Activated naive CD8-positive, alpha-beta T cell treated with anti-CD3 and anti-CD28 coated beads, Interleukin-2, amount 10 ng/mL, durations not matched to agents 7 days and 5 days (primary cell): ENCODE measurements at regions of chr21 and their contacts with region 1.

Region 1: GRCh38 chr21:29018540-29018939 is 609 bp downstream of the RWDD2B start:
- DNase-seq: no peak
- ATAC-seq: no peak
- H3K4me3 Mint-ChIP-seq: peak overlapping the region; percentile 85
- H3K27ac Mint-ChIP-seq: peak overlapping the region; percentile 93
- H3K4me1 Mint-ChIP-seq: peaks cover 29% of the 10 kb centered on the region
- H3K27me3 Mint-ChIP-seq: no peaks in the 10 kb centered on the region

Region 2: GRCh38 chr21:28884976-28885852 is 133.3 kb before region 1 on chr21:
- POLR2A ChIA-PET with region 1: no interaction called
- DNase-seq: peak; percentile 92
- ATAC-seq: peak; percentile 97
- H3K4me3 Mint-ChIP-seq: peak overlapping the region; percentile 96
- H3K27ac Mint-ChIP-seq: peak overlapping the region; percentile 100
- H3K4me1 Mint-ChIP-seq: peaks cover 14% of the 10 kb centered on the region
- H3K27me3 Mint-ChIP-seq: no peaks in the 10 kb centered on the region

Region 3: GRCh38 chr21:28992526-28993292 is 25.8 kb before region 1 on chr21 and contains the start of gene LTN1:
- POLR2A ChIA-PET with region 1: interaction called, 60 read pairs
- DNase-seq: peak; percentile 96
- ATAC-seq: peak; percentile 95
- H3K4me3 Mint-ChIP-seq: peak within 1 kb of the TSS; percentile 96
- H3K27ac Mint-ChIP-seq: peak within 1 kb of the TSS; percentile 95
- H3K4me1 Mint-ChIP-seq: peaks cover 27% of the 10 kb centered on the region
- H3K27me3 Mint-ChIP-seq: no peaks in the 10 kb centered on the region
- total RNA-seq, gene LTN1: 27.4 to 29.3 TPM

Region 4: GRCh38 chr21:29053011-29053553 is 34.5 kb after region 1 on chr21:
- POLR2A ChIA-PET with region 1: no interaction called
- DNase-seq: no peak
- ATAC-seq: no peak
- H3K4me3 Mint-ChIP-seq: no peak overlapping the region
- H3K27ac Mint-ChIP-seq: no peak overlapping the region
- H3K4me1 Mint-ChIP-seq: peaks cover 3% of the 10 kb centered on the region
- H3K27me3 Mint-ChIP-seq: no peaks in the 10 kb centered on the region